ENCODE measurements at regions of chr4 and their contacts with region 1.

Region 1: DNA sequence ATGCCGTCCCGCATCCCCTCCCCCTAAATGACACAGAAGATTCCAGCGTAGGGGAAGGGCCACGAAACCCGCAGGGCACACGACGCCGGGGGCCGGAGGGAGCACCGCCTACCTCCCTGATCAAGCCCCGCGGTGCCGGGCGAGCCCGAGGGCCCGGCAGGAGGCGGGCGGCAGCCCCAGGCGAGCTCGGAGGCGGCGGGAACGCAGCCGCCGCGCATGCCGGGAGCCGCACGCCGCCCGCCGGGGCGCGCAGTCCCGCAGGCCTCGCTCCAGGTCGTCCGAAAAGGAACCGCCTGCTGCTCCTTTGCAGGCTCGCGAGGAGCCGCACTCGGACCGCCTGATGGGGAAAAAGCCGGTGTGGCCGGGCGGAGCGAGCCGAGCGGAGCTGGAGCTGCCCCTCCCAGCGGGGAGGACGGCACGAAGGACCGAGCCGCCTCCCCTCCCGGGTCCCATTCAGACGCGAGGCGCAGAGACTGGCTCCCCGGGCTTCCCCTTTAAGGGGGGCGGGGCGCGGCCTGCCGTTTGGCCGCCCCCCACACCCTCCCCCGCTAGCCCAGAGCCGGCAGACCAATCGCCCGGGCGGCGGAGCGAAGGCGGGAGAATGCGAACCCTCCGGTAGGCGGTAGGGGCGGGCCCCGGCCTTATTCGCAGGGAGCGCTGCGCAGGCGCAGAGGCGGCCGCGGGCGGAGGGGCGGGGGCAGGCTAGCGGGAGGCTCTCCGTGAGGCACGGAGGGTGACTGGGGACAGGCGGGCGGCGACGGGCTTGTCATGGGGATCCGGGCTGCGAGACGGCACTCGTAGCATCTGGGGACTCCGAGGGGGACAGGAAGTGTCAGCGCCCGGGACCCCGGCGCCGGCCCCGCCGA is 561 bp upstream of the ING2 start:
- DNase-seq: peak; percentile 99 to 100 (median 99)
- H3K4me3 ChIP-seq: peak overlapping the region; percentile 57
- H3K27ac ChIP-seq: peak overlapping the region; percentile 97
- H3K4me1 ChIP-seq: peaks cover 1% of the 10 kb centered on the region
- H3K27me3 ChIP-seq: no peaks in the 10 kb centered on the region
- CTCF ChIP-seq: peak; percentile 5 to 73 (median 53)
- EP300 ChIP-seq: no peak
- POLR2A ChIP-seq: peak; percentile 61

Region 2: DNA sequence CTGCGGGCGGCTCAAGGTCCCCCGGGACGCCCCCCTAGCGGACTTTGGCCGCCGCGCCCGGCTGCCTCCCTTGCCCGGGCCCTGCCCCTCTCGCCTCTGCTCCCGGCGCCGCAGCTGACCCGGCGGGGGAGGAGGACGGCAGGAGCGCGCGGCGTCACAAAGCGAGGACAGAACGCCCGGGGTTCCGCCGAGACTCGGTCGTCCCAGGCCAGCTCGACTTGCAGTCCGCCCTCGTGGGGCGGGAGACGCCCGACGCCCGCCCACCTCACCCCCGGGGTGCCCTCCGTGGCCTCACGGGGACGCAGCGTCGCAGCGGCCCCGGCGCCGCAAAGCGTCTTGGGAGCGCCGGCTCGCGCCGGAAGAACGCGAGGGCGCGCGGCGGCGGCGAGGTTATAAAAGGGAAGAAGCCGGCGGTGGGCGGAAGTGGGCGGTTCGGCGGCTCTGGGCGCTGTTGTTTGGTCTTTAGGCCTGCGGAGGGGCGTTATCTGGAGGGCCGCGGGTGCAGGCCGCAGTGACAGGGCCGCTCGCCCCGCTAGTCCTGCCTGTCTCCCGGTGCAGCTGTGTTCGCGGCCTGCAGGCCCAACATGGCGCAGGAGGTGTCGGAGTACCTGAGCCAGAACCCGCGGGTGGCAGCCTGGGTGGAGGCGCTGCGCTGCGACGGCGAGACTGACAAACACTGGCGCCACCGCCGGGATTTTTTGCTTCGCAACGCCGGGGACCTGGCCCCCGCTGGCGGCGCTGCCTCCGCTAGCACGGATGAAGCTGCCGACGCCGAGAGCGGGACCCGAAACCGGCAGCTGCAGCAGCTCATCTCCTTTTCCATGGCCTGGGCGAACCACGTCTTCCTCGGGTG is 59.9 kb before region 1 on chr4 and contains the start of gene CDKN2AIP:
- intact Hi-C with region 1: loop called in 1 of 4 experiments (anchors 10 kb)
- DNase-seq: peak; percentile 91 to 96 (median 93)
- H3K4me3 ChIP-seq: peak within 1 kb of the TSS; percentile 93
- H3K27ac ChIP-seq: peak within 1 kb of the TSS; percentile 84 to 99
- H3K4me1 ChIP-seq: peaks cover 2% of the 10 kb centered on the region
- H3K27me3 ChIP-seq: no peaks in the 10 kb centered on the region
- CTCF ChIP-seq: peak in 1 of 3 donors; percentile 23
- EP300 ChIP-seq: no peak
- POLR2A ChIP-seq: peak; percentile 91
- total RNA-seq, gene CDKN2AIP: 17.8 to 28.8 (median 19.2) TPM

Region 3: DNA sequence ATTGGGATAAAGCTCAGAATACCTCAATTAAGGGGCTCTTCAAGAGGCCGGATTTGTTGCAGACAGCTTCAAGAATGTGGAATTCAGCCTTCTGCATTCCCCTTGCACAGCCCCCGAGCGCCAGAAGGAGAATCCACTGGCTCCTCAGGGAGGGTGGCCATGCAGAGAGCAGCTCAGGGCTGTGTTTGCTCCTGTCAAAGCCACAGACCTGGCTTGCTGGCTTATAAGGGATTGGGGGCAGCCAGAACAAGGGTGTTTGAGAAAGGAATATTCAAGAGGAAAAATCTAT is 37.4 kb after region 1 on chr4:
- intact Hi-C with region 1: loop called in 1 of 4 experiments (anchors 2 kb)
- DNase-seq: peak in 4 of 5 donors; percentile 42 to 61 (median 45)
- H3K4me3 ChIP-seq: no peak overlapping the region
- H3K27ac ChIP-seq: peak overlapping the region in 1 of 2 donors; percentile 95
- H3K4me1 ChIP-seq: peaks cover 16% of the 10 kb centered on the region
- H3K27me3 ChIP-seq: no peaks in the 10 kb centered on the region
- CTCF ChIP-seq: no peak
- EP300 ChIP-seq: no peak
- POLR2A ChIP-seq: no peak

Region 4: DNA sequence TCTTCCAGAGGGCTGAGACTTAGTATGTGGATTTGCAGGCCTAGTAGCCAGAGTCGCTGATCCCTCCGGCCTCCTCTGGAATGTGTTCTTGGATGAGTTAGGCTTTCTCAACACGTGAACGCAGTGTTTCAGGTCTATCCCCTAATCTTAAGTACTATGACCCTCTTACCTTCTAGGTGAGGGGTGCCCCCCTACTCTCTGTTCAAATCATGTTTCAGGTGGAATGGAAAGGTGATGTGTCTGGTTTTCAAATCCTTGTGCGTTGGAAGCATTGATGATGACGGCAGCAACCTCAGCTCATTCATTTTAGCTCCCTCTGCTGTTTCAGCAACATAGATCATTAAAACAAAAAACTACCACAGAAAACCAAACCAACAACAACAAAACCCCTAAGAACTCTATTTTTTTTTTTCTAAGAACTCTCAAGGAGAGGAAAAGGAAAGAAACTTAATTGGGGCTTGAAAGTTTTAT is 98.3 kb after region 1 on chr4:
- intact Hi-C with region 1: loop called in 3 of 4 experiments (anchors 10 kb)
- DNase-seq: peak in 1 of 5 donors; percentile 48
- H3K4me3 ChIP-seq: no peak overlapping the region
- H3K27ac ChIP-seq: peak overlapping the region in 1 of 2 donors; percentile 30
- H3K4me1 ChIP-seq: no peaks in the 10 kb centered on the region
- H3K27me3 ChIP-seq: no peaks in the 10 kb centered on the region
- CTCF ChIP-seq: peak; percentile 41 to 71 (median 46)
- EP300 ChIP-seq: no peak
- POLR2A ChIP-seq: no peak

Region 5: GRCh38 chr4:183659029-183659871 is 155.0 kb after region 1 on chr4 and contains the starts of genes RWDD4 and TRAPPC11:
- intact Hi-C with region 1: loop called in 1 of 4 experiments (anchors 2 kb)
- DNase-seq: peak; percentile 98 to 99 (median 98)
- H3K4me3 ChIP-seq: peak within 1 kb of the TSS; percentile 92
- H3K27ac ChIP-seq: peak within 1 kb of the TSS; percentile 73 to 90
- H3K4me1 ChIP-seq: peaks cover 3% of the 10 kb centered on the region
- H3K27me3 ChIP-seq: no peaks in the 10 kb centered on the region
- CTCF ChIP-seq: peak in 2 of 3 donors; percentile 80 to 82
- EP300 ChIP-seq: no peak
- POLR2A ChIP-seq: peak; percentile 94
- total RNA-seq, gene RWDD4: 29.0 to 63.5 (median 37.8) TPM
- total RNA-seq, gene TRAPPC11: 29.7 to 52.7 (median 43.9) TPM